ENCODE measurements at regions of chr16 and their contacts with region 1.

Region 1: GRCh38 chr16:63749276-63749675 is 1372.6 kb downstream of the CDH11 start:
- DNase-seq: no peak
- ATAC-seq: no peak
- H3K4me3 ChIP-seq: no peak overlapping the region
- H3K27ac ChIP-seq: no peak overlapping the region
- H3K4me1 ChIP-seq: no peaks in the 10 kb centered on the region
- H3K27me3 ChIP-seq: no peaks in the 10 kb centered on the region
- CTCF ChIP-seq: no peak
- POLR2A ChIP-seq: no peak
- RAD21 ChIP-seq: no peak

Region 2: DNA sequence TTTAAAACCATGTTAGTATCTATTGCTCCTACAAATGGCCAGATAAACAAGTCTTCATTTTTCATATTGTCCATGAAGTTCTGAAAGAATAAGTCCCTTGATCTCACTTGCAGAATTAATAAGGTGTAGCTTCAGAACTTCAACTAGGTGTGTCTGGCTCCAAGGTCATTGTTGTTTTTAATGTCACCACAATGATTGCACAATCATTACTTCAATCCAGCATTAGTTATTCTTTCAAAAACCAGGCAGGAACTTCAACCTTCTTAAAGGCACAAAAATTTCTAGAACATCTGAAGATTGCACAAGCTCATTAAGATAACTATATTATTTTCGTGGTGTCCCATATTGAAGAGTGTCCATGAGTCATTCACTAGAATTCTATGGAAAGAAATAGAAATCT is 13.8 kb before region 1 on chr16:
- CTCF ChIA-PET with region 1: no interaction called
- POLR2A ChIA-PET with region 1: no interaction called
- RAD21 ChIA-PET with region 1: no interaction called
- intact Hi-C with region 1: loop called (anchors 1 kb)
- DNase-seq: no peak
- ATAC-seq: no peak
- H3K4me3 ChIP-seq: no peak overlapping the region
- H3K27ac ChIP-seq: no peak overlapping the region
- H3K4me1 ChIP-seq: no peaks in the 10 kb centered on the region
- H3K27me3 ChIP-seq: no peaks in the 10 kb centered on the region
- CTCF ChIP-seq: no peak
- POLR2A ChIP-seq: no peak
- RAD21 ChIP-seq: no peak

Region 3: GRCh38 chr16:63804126-63804525 is 54.9 kb after region 1 on chr16:
- CTCF ChIA-PET with region 1: no interaction called
- POLR2A ChIA-PET with region 1: no interaction called
- RAD21 ChIA-PET with region 1: no interaction called
- intact Hi-C with region 1: no loop called
- DNase-seq: no peak
- ATAC-seq: no peak
- H3K4me3 ChIP-seq: no peak overlapping the region
- H3K27ac ChIP-seq: no peak overlapping the region
- H3K4me1 ChIP-seq: no peaks in the 10 kb centered on the region
- H3K27me3 ChIP-seq: no peaks in the 10 kb centered on the region
- CTCF ChIP-seq: no peak
- POLR2A ChIP-seq: no peak
- RAD21 ChIP-seq: no peak

Measured in HCT116 (cell line).